Activated B cell treated with CpG ODN at 0.5 μM for 24 hours (primary cell): ENCODE measurements at regions of chr21 and their contacts with region 1.

Region 1: DNA sequence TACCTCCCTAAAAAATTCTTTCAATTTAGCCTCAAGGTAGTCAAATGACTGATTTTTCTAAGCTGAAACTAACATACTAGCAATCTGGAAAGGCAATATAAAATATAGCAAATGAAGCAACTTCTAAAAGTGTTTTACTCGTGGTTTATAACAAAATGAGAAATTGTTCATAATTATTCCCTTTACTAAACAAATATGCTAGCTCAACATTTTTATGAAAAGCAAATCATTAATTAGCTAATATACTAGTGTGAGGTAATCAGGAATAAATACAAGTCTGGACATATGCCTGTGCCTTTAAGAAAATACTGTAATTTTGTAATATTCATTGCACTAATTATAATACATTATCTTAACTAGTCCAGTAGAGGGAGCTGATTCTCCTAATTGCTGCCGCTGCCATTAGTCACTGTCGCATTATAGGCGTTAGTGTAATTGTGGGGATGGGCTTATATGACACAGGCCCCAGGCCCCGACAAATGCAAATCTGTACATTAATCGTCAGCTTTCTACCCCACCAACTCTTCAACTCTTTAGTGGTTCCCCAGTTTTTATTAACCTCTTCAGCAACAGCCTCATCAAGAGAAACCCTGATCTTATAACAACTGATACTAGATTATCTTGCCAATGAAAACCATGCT is 160.9 kb downstream of the GABPA start:
- DNase-seq: no peak
- ATAC-seq: peak; percentile 84
- H3K4me3 Mint-ChIP-seq: no peak overlapping the region
- H3K27ac Mint-ChIP-seq: no peak overlapping the region
- H3K4me1 Mint-ChIP-seq: peaks cover 3% of the 10 kb centered on the region
- H3K27me3 Mint-ChIP-seq: no peaks in the 10 kb centered on the region
- CTCF ChIP-seq: no peak

Region 2: DNA sequence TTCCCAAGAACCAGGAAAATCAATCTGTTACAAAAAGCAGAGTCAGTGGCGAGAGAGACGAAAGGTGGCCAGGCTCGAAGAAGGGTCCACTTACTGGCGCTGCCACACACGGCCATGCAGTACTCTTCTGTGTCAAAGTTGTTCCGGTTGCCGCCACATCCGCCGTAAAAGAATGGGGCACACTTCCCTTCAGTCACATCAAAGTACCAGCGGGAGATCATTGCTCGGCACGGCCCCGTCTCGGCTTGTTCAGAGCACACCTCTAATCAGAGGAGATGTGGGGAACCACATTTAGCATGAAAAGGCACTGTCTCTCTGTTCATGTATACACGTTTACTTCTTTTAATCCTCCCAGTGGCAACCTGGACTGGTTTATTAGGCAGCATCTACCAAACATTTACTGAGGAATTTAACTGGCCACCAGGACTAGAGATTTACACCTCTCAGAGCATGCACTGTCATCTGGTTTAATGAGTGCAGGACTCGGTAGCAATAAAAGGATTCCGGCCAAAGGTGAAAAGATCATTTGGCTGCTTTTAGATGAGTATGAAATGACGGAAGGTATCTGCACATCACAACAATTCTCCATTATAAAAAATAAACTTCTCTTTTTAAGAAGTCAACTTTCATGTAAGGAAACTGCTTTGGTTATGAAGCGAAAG is 104.4 kb after region 1 on chr21:
- CTCF ChIA-PET with region 1: interaction called, 4 read pairs
- POLR2A ChIA-PET with region 1: no interaction called
- intact Hi-C with region 1: loop called (anchors 1 kb)
- DNase-seq: no peak
- ATAC-seq: no peak
- H3K4me3 Mint-ChIP-seq: peak overlapping the region; percentile 7
- H3K27ac Mint-ChIP-seq: no peak overlapping the region
- H3K4me1 Mint-ChIP-seq: peaks cover 4% of the 10 kb centered on the region
- H3K27me3 Mint-ChIP-seq: no peaks in the 10 kb centered on the region
- CTCF ChIP-seq: no peak

Region 3: GRCh38 chr21:26032263-26032662 is 136.6 kb after region 1 on chr21:
- CTCF ChIA-PET with region 1: interaction called, 6 read pairs
- POLR2A ChIA-PET with region 1: no interaction called
- intact Hi-C with region 1: loop called (anchors 1 kb)
- DNase-seq: no peak
- ATAC-seq: no peak
- H3K4me3 Mint-ChIP-seq: no peak overlapping the region
- H3K27ac Mint-ChIP-seq: no peak overlapping the region
- H3K4me1 Mint-ChIP-seq: no peaks in the 10 kb centered on the region
- H3K27me3 Mint-ChIP-seq: no peaks in the 10 kb centered on the region
- CTCF ChIP-seq: no peak

Region 4: GRCh38 chr21:26715878-26716506 is 820.3 kb after region 1 on chr21:
- CTCF ChIA-PET with region 1: interaction called, 4 read pairs
- POLR2A ChIA-PET with region 1: no interaction called
- intact Hi-C with region 1: loop called (anchors 1 kb)
- DNase-seq: no peak
- ATAC-seq: no peak
- H3K4me3 Mint-ChIP-seq: no peak overlapping the region
- H3K27ac Mint-ChIP-seq: no peak overlapping the region
- H3K4me1 Mint-ChIP-seq: no peaks in the 10 kb centered on the region
- H3K27me3 Mint-ChIP-seq: peaks cover 3% of the 10 kb centered on the region
- CTCF ChIP-seq: no peak